Right lobe of liver (tissue), 6 donors: ENCODE measurements at regions of chr6 and their contacts with region 1.

Region 1: DNA sequence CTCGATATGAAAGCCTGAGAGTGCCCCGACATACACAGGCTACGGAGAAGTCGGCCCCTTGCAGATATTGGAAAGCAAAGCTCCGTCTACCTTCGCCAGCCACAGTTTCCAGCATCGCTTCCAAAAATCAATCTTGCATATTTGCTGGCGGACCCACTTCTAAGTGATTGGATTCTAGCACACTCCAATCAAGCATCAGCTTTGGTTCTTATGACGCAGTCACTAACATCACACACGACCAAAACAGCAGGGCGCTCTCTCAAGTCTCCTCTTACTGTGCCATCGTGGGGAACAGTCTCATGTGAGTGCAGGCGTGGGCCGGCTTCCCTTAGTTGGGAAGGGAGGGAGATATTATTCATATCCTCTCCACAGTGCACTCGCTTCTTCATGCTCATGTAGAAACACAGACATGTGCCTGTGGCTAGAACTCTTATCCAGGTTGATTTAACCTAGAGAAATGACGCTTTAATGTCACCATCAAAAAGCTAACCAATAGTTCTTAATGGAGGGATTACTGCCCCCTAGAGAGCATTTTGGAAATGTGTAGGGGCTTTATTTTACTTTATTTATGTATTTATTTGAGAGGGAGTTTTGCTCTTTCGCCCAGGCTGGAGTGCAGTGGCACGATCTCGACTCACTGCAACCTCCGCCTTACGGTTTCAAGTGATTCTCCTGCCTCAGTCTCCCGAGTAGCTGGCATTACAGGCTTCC is 229.8 kb downstream of the SOD2 start:
- DNase-seq: no peak
- ATAC-seq: peak; percentile 50 to 73 (median 68)
- H3K4me3 ChIP-seq: no peak overlapping the region
- H3K27ac ChIP-seq: no peak overlapping the region
- H3K4me1 ChIP-seq: no peaks in the 10 kb centered on the region
- H3K27me3 ChIP-seq: no peaks in the 10 kb centered on the region
- CTCF ChIP-seq: peak; percentile 43 to 61 (median 59)
- POLR2A ChIP-seq: no peak

Region 2: DNA sequence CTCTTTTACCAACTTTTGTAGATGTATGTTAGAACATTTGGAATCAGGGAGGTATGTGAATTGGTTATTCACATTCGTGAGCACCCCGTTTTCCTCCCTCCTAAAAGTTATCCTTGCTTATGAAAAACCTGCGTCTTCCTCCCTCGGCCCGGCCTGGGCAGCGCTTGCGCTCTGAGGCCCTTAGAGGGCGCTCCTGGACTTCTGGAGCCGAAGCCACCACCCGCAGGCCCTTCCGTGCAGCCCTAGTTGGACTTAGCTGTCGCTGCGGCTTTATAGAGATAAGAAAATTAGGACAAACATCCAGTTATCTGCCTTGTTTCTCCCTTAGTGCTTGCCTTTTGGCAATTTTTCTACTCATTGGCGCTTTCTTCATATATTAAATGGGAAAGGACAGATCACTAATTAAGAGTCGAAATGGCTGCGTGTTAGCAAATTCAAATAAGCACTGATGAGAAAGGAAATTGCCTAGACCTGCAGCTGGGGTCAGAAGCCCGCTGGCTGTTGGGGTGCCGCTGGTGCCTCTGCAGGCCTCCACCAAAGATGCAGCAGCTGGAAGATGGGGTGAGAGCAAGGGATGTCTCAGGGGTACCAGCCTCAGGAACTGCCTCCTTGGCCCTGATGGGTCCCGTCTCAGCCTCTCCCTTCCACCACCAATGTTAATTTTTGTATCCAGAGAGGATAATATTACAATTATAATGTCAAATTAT is 288.9 kb before region 1 on chr6:
- intact Hi-C with region 1: loop called in 1 of 2 experiments (anchors 10 kb)
- DNase-seq: peak; percentile 77 to 81 (median 78)
- ATAC-seq: peak; percentile 93 to 98 (median 96)
- H3K4me3 ChIP-seq: no peak overlapping the region
- H3K27ac ChIP-seq: no peak overlapping the region
- H3K4me1 ChIP-seq: peaks cover 0 to 9% (median 0%) of the 10 kb centered on the region in 4 donors
- H3K27me3 ChIP-seq: peaks cover 6% of the 10 kb centered on the region in 2 donors
- CTCF ChIP-seq: peak; percentile 80 to 97 (median 94)
- POLR2A ChIP-seq: no peak

Region 3: DNA sequence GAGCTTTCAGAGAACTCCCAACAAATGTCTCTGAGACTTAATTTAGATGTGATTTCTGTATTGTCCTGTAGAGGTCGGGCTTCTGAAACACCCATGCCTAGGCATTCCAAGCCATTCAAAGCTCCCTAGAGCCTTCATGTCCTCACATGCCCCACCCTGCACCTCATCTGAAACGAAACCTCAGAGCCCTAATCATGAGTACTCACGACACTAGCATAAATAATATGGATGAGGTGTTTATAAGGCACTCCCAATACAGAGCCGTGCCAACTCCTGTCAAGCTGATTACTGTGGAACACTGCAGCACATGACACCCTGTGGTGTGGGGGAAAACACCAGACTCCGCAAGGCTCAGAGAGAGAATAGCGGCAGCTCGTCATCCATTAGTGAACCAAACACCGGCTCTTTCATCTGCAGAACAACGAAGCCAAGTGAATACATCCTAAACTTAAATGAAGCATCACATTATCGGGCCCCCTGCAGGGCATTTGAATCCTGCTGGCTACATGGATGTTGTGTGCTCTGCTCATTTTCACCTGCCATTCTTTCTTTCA is 210.2 kb before region 1 on chr6:
- intact Hi-C with region 1: loop called in 1 of 2 experiments (anchors 5 kb)
- DNase-seq: no peak
- ATAC-seq: peak; percentile 48 to 65 (median 60)
- H3K4me3 ChIP-seq: no peak overlapping the region
- H3K27ac ChIP-seq: no peak overlapping the region
- H3K4me1 ChIP-seq: peaks cover 0 to 32% (median 9%) of the 10 kb centered on the region in 4 donors
- H3K27me3 ChIP-seq: no peaks in the 10 kb centered on the region
- CTCF ChIP-seq: peak; percentile 54 to 66 (median 64)
- POLR2A ChIP-seq: no peak